Ascending aorta (tissue), 2 donors: ENCODE measurements at regions of chrX and their contacts with region 1.

Region 1: DNA sequence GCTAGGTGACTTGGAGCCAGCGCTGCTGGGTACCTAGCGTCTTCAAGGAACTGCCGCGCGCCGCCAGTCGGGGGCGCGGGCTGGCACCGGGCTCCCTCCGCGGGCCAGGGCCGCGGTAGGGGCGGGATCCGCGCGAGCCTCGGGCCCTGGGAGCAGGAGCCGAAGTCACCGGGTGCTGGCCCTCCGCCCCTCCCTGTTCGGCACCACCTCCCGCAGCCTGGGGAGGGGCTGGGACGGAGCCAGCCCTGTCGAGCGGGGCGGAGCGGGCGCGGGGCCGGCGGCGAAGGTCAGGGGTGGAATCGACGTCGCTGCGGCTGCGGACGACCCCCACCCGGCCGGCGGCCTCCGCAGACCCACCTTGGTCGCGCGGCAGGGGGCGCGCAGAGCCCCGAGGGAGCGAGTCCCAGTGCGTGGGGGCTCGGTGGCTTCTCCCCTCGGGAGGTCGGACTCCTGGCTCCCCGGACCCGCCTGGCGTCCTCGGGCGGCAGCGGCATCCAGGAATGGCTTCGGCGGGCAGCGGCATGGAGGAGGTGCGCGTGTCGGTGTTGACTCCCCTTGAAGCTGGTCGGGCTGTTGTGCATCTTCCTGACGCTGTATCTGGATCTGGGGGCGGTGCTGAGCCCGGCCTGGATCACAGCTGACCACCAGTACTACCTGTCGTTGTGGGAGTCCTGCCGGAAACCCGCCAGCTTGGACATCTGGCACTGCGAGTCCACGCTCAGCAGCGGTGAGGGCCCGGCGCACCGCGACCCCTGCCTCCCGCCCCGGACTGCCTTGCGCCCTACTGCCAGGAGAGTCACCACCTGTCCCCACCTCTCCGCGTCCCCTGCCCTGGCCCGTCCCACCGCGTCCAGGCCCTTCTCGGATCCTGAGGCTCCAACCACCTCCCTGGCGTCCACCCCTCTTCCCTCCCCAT is 50.5 kb upstream of the FAM47C start:
- DNase-seq: no peak
- H3K4me3 ChIP-seq: peak overlapping the region; percentile 42 to 68
- H3K27ac ChIP-seq: no peak overlapping the region
- H3K4me1 ChIP-seq: no peaks in the 10 kb centered on the region
- H3K27me3 ChIP-seq: no peaks in the 10 kb centered on the region
- CTCF ChIP-seq: peak in 2 of 3 experiments; percentile 9 to 23

Region 2: GRCh38 chrX:36983831-36984230 is 26.2 kb after region 1 on chrX:
- intact Hi-C with region 1: loop called (anchors 2 kb)
- DNase-seq: no peak
- H3K4me3 ChIP-seq: no peak overlapping the region
- H3K27ac ChIP-seq: no peak overlapping the region
- H3K4me1 ChIP-seq: no peaks in the 10 kb centered on the region
- H3K27me3 ChIP-seq: no peaks in the 10 kb centered on the region
- CTCF ChIP-seq: no peak

Region 3: GRCh38 chrX:37075892-37076595 is 118.4 kb after region 1 on chrX:
- intact Hi-C with region 1: no loop called
- DNase-seq: no peak
- H3K4me3 ChIP-seq: no peak overlapping the region
- H3K27ac ChIP-seq: no peak overlapping the region
- H3K4me1 ChIP-seq: no peaks in the 10 kb centered on the region
- H3K27me3 ChIP-seq: no peaks in the 10 kb centered on the region
- CTCF ChIP-seq: no peak